ENCODE measurements at regions of chr4 and their contacts with region 1.

Region 1: GRCh38 chr4:163681208-163681821 is 186.8 kb downstream of the TMA16 start:
- DNase-seq: peak; percentile 72 to 81 (median 75)
- H3K4me3 ChIP-seq: no peak overlapping the region
- H3K27ac ChIP-seq: no peak overlapping the region
- H3K4me1 ChIP-seq: no peaks in the 10 kb centered on the region
- H3K27me3 ChIP-seq: no peaks in the 10 kb centered on the region

Region 2: GRCh38 chr4:163562496-163562895 is 118.8 kb before region 1 on chr4:
- CTCF ChIA-PET with region 1: interaction called, 173 read pairs
- POLR2A ChIA-PET with region 1: no interaction called
- DNase-seq: no peak
- H3K4me3 ChIP-seq: no peak overlapping the region
- H3K27ac ChIP-seq: no peak overlapping the region
- H3K4me1 ChIP-seq: peaks cover 6 to 23% (median 16%) of the 10 kb centered on the region in 4 experiments
- H3K27me3 ChIP-seq: no peaks in the 10 kb centered on the region

Region 3: GRCh38 chr4:163663454-163664225 is 17.7 kb before region 1 on chr4:
- CTCF ChIA-PET with region 1: interaction called, 18 read pairs
- POLR2A ChIA-PET with region 1: no interaction called
- DNase-seq: peak in 1 of 3 donors; percentile 9
- H3K4me3 ChIP-seq: no peak overlapping the region
- H3K27ac ChIP-seq: no peak overlapping the region
- H3K4me1 ChIP-seq: peaks cover 9 to 37% (median 25%) of the 10 kb centered on the region in 4 experiments
- H3K27me3 ChIP-seq: no peaks in the 10 kb centered on the region

Region 4: GRCh38 chr4:163694385-163694784 is 13.1 kb after region 1 on chr4:
- CTCF ChIA-PET with region 1: interaction called, 16 read pairs
- POLR2A ChIA-PET with region 1: no interaction called
- DNase-seq: no peak
- H3K4me3 ChIP-seq: no peak overlapping the region
- H3K27ac ChIP-seq: no peak overlapping the region
- H3K4me1 ChIP-seq: peaks cover 0 to 2% (median 0%) of the 10 kb centered on the region in 4 experiments
- H3K27me3 ChIP-seq: no peaks in the 10 kb centered on the region